Activated T-helper 2 cell treated with anti-CD3 and anti-CD28 coated beads, Interferon-gamma antibody, Interleukin-2, Interleukin-4, amounts not matched to agents 10 μg/mL and 5 μg/mL and 100 μg/mL, durations not matched to agents 14 hours and 24 hours and 36 hours (primary cell): ENCODE measurements at regions of chr9 and their contacts with region 1.

Region 1: DNA sequence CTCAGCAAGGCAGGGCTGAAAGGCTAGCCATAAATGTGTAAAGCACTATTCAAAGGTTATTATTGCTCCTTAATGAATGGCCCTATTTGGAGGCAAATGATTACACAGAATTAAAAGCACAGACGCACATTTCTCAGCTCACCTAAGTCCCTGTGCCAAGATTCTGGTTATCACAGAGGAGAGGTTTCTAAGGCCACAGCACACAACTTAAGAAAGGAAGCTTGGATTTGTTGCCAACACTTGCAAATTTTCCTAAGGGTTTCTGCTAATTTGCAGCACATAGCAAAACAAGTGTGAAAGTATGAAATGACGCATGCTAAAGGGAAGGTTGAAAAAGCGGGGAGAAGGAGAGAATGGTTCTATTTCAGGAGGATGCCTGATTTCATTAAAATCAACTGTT is 834.1 kb upstream of the C9orf72 start:
- DNase-seq: no peak
- H3K4me3 Mint-ChIP-seq: no peak overlapping the region
- H3K27ac Mint-ChIP-seq: no peak overlapping the region
- H3K4me1 Mint-ChIP-seq: no peaks in the 10 kb centered on the region
- H3K27me3 Mint-ChIP-seq: no peaks in the 10 kb centered on the region

Region 2: GRCh38 chr9:28443461-28443860 is 36.1 kb after region 1 on chr9:
- intact Hi-C with region 1: no loop called
- DNase-seq: no peak
- H3K4me3 Mint-ChIP-seq: no peak overlapping the region
- H3K27ac Mint-ChIP-seq: no peak overlapping the region
- H3K4me1 Mint-ChIP-seq: no peaks in the 10 kb centered on the region
- H3K27me3 Mint-ChIP-seq: no peaks in the 10 kb centered on the region

Region 3: DNA sequence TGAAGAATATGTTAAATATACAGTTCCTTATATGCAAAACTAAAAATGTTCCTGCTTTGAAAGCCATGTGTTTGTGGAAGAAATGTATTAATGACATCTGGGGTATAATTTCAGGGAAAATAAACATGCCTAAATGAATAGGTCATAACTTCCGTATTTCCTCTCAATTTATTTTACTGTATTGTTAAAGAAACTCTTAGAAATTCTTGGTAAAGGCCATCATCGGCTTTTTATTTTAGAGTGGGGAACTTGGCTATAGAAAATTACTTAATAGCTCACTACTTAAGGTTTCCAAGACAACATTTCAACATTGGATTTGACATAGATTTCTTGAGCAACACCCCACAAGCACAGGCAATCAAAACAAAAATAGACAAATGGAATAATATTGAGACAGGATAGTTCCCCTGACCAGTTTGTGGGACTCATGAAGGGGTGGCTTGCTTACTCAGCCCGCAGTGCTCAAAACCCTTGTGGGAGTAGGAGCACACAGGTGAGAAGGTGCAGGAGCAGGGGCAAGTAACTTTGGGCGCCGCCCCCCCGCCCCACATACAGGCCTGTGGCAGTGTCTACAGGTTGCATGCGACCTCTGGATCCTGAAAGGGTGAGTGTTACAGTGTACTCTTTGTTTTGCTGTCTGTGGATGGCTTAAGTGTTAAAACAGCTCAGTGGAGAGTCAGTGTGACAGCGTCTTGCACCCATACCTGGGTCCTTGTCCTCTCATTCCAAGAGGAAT is 57.3 kb after region 1 on chr9:
- intact Hi-C with region 1: loop called (anchors 10 kb)
- DNase-seq: no peak
- H3K4me3 Mint-ChIP-seq: no peak overlapping the region
- H3K27ac Mint-ChIP-seq: no peak overlapping the region
- H3K4me1 Mint-ChIP-seq: no peaks in the 10 kb centered on the region
- H3K27me3 Mint-ChIP-seq: no peaks in the 10 kb centered on the region